ENCODE measurements at regions of chr5 and their contacts with region 1.

Region 1: GRCh38 chr5:36305571-36306326 is 4.0 kb upstream of the RANBP3L start:
- DNase-seq: peak; percentile 77

Region 2: DNA sequence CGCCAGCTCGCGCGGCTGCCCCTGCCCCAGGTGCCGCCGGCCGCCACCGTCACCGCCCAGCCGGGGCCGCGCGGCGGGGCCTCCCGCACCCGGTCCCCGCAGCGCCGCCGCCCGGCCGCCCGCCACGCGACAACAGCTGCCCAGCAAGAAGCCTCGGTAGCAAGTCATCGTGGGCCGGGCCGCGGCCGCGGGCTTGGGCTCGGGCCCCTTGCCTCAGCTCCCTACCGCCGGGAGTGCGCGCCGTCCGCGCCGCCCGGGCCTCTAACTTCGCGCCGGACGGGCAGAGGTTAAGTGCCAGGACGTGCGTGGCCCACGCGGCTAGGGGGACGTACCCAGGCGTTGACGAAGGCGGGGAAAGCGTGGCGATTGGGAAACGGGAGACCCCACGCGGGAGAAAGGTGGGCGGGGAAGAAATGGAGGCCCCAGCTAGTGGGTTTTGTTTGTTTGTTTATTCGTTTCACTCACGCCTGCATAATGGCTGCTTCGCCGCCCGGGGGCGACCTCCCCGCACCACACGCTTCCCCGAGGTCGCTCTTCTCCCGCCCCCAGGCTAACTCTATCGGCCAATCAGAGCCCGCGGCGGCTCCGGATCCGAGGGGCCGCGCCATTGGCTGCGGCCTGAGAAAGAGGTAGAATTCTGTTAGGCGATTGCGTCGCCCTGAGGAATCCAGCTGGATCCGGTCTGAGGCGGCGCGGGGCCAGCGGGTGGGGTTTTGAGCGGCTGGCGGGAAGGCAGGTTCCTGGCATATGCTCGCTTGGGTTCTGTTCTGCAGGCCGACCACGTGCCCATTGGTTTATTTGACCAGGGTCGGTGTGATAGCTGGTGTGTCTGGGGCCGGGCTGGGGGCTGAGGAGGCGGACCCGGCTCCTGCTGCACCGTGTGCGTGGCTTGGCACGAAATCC is 63.9 kb before region 1 on chr5 and contains the start of gene NADK2:
- intact Hi-C with region 1: loop called in 1 of 2 experiments (anchors 10 kb)
- DNase-seq: peak; percentile 99
- total RNA-seq, gene NADK2: 30.9 to 31.8 TPM

Region 3: DNA sequence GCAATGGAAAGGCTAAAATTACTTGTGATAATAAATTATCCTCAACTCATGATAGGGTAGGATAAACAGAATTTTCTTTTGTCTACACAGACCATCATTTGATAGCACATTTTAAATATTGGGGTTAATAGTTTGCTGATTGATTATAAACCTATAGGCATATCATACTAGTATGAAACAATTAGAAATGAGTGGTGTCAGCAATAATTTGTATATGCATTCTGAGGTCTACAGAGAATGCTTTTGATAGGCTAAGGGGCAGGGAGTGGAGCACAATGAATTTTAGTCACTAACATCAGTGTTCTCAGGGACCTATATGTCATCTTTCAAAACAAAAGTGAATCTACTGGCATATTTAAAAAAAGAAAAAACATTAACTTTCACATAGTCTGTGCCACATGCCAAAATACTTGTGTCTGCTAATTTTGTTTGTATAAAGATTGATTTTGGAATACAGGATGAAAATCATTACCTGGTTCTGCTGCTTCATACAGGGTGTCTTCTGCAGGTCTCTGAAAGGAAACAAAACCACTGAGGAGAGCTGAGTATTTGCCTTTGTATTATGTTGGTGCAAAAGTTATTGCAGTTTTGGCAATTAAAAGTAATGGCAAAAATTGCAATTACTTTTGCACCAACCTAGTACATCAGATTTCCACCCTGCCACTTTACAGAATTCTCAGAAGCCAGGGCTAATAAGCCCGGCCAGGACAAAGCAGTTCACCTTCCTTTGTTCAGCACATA is 36.1 kb before region 1 on chr5:
- intact Hi-C with region 1: loop called in 1 of 2 experiments (anchors 5 kb)
- DNase-seq: no peak